Mammary epithelial cell (primary cell): ENCODE measurements at regions of chr20 and their contacts with region 1.

Region 1: GRCh38 chr20:48846498-48847485 is 19.0 kb upstream of the PREX1 start:
- DNase-seq: no peak
- H3K4me3 ChIP-seq: no peak overlapping the region
- H3K27ac ChIP-seq: no peak overlapping the region
- H3K4me1 ChIP-seq: no peaks in the 10 kb centered on the region
- H3K27me3 ChIP-seq: no peaks in the 10 kb centered on the region
- CTCF ChIP-seq: no peak

Region 2: GRCh38 chr20:48405669-48406308 is 441.0 kb before region 1 on chr20:
- CTCF ChIA-PET with region 1: no interaction called
- dilution Hi-C with region 1: no loop called
- in situ Hi-C with region 1: no loop called
- intact Hi-C with region 1: no loop called
- DNase-seq: no peak
- H3K4me3 ChIP-seq: no peak overlapping the region
- H3K27ac ChIP-seq: no peak overlapping the region
- H3K4me1 ChIP-seq: no peaks in the 10 kb centered on the region
- H3K27me3 ChIP-seq: peaks cover 2% of the 10 kb centered on the region
- CTCF ChIP-seq: no peak

Region 3: DNA sequence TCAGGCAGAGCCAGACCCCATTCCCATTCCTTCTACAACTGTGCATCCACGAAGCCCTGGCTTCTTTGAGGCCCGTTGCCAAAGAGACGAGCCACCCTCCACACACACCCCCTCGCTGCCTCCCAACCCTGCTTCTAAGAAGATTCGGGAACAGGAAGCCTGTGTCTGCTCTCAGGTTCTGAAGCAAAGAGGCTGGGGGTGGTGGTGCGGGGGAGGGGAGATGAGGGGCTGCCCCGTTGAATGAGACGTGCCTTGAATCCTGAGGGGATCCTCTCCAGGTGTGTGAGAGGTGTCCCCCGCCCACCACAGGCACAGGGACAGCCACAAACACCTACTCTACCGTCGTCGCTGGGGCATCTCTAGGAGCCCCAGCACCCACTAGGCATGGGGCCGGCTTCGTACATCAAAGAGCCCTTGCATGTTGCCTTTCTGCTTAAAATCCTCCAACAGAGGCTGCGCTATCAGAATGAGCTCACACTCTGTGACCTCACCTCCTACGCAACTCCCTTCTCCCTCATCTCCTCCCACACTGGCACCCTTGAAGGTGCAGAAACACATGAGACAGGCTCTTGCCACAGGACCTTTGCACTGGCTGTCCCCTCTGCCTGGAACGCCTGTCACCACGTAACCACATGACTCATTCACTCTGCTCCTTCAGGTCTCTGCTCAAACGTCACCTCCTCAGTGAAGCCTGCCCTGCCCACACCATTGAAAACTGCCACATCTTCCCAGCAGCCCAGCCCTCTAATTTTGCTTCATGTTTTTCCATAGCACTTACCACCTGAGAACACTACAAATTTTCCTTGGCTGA is 77.5 kb before region 1 on chr20:
- CTCF ChIA-PET with region 1: no interaction called
- dilution Hi-C with region 1: loop called (anchors 5 kb)
- in situ Hi-C with region 1: no loop called
- intact Hi-C with region 1: no loop called
- DNase-seq: no peak
- H3K4me3 ChIP-seq: no peak overlapping the region
- H3K27ac ChIP-seq: no peak overlapping the region
- H3K4me1 ChIP-seq: no peaks in the 10 kb centered on the region
- H3K27me3 ChIP-seq: peaks cover 2% of the 10 kb centered on the region
- CTCF ChIP-seq: no peak

Region 4: GRCh38 chr20:48897246-48897994 is 50.6 kb after region 1 on chr20:
- CTCF ChIA-PET with region 1: no interaction called
- dilution Hi-C with region 1: no loop called
- in situ Hi-C with region 1: no loop called
- intact Hi-C with region 1: loop called (anchors 5 kb)
- DNase-seq: peak; percentile 76
- H3K4me3 ChIP-seq: no peak overlapping the region
- H3K27ac ChIP-seq: peak overlapping the region; percentile 66
- H3K4me1 ChIP-seq: peaks cover 8% of the 10 kb centered on the region
- H3K27me3 ChIP-seq: no peaks in the 10 kb centered on the region
- CTCF ChIP-seq: no peak

Region 5: DNA sequence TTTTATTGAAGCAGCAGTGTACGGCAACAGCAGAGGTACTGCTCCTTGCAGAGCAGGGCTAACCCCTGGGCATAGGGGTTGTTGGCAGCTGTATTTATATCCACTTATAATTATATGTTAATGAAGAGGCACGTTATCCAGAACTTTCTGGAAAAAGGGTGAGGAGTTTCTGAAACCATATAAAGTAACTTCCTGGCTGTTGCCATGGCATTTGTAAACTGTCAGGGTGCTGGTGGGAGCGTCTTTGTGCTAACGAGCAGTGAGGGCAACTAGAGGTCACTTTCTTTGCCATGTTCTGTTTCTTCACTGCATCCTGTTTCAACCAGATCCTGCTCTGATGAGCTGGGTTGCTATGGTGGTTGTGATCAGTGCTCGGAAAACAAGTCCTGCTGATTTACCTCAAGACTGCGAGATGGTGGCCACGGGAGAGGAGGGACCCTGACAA is 63.6 kb after region 1 on chr20:
- CTCF ChIA-PET with region 1: no interaction called
- dilution Hi-C with region 1: no loop called
- in situ Hi-C with region 1: no loop called
- intact Hi-C with region 1: no loop called
- DNase-seq: no peak
- H3K4me3 ChIP-seq: no peak overlapping the region
- H3K27ac ChIP-seq: no peak overlapping the region
- H3K4me1 ChIP-seq: no peaks in the 10 kb centered on the region
- H3K27me3 ChIP-seq: peaks cover 3% of the 10 kb centered on the region
- CTCF ChIP-seq: no peak

Region 6: GRCh38 chr20:48945851-48946514 is 99.2 kb after region 1 on chr20:
- CTCF ChIA-PET with region 1: no interaction called
- dilution Hi-C with region 1: no loop called
- in situ Hi-C with region 1: no loop called
- intact Hi-C with region 1: no loop called
- DNase-seq: peak; percentile 83
- H3K4me3 ChIP-seq: no peak overlapping the region
- H3K27ac ChIP-seq: no peak overlapping the region
- H3K4me1 ChIP-seq: peaks cover 8% of the 10 kb centered on the region
- H3K27me3 ChIP-seq: no peaks in the 10 kb centered on the region
- CTCF ChIP-seq: no peak